ENCODE measurements at regions of chr1 and their contacts with region 1.

Region 1: DNA sequence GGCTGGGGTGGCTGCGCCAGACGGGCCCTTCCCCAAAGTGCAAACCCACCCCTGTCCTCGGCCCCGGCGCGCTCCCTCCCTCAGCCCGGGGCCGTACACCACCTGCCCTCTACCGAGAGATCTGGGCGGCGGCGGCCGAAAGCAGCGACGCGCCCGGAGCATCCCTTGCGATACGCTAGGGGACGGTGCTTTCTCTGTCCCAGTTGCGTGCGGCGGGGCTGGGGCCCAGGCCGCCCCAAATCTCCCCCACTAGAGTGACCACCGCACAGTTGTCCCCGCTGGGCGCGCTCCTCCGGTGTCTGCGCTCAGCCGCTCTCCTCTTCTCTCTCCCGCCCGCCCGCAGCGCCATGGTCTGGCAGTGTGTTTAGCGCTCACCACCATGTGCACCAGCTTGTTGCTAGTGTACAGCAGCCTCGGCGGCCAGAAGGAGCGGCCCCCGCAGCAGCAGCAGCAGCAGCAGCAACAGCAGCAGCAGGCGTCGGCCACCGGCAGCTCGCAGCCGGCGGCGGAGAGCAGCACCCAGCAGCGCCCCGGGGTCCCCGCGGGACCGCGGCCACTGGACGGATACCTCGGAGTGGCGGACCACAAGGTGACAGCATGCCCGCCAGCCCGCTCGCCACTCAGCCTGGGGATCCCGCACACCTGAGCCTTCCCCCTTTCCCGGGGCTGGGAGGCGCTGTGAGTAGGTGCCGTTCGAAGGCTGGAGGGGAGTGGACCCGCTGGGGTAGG is 1.0 kb downstream of the ST6GALNAC5 start:
- DNase-seq: peak; percentile 54 to 84
- ATAC-seq: peak; percentile 82
- H3K4me3 ChIP-seq: peak overlapping the region; percentile 57 to 79
- H3K27ac ChIP-seq: no peak overlapping the region
- H3K4me1 ChIP-seq: peaks cover 0 to 3% of the 10 kb centered on the region in 2 donors
- H3K27me3 ChIP-seq: no peaks in the 10 kb centered on the region

Region 2: GRCh38 chr1:76330991-76331603 is 537.2 kb before region 1 on chr1:
- intact Hi-C with region 1: loop called in 1 of 2 experiments (anchors 5 kb)
- DNase-seq: no peak
- ATAC-seq: peak; percentile 71
- H3K4me3 ChIP-seq: no peak overlapping the region
- H3K27ac ChIP-seq: no peak overlapping the region
- H3K4me1 ChIP-seq: peaks cover 0 to 3% of the 10 kb centered on the region in 2 donors
- H3K27me3 ChIP-seq: no peaks in the 10 kb centered on the region

Region 3: DNA sequence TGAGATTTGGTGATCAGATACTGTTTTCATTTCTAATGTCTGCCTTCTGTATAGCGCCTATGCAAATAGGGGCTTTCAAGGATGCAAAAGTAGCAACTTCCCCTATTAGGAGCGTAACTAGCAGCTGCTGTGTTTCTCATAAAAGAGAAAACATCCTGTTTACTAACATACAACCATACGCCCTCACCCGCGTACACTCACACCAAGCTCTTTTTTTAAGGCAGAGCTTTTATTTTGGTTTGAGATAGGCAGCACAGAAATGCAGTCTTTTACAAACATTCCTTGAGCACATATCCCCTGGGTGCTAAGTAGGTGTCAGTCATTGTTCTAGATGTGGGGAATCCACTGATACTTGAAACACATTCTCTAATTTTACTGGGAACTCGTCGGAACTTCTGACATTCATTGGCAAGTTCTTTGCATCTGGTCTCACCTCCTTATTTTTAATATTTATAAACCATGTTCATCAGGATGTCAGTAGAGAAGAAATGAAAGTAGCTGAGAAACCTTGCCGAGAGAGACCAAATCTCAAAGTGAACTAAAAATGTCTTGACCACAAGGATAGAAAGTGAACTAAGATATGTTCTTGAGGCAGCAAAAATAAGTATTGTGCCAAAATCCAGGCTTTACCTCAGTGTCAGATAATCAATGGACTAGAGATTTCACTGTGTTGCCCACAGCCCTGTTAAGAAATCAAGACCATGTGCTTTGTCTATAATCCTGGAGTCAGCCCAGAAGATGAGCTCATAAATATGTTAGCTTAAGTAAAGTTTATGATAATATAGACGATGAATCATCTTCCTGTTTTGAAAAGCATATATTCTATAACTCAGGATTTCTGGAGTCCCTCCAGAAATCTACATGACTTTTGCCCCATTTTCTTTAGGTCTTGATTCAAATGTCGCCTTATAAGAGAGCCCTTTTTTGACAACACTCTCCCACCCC is 442.8 kb before region 1 on chr1:
- intact Hi-C with region 1: loop called in 1 of 2 experiments (anchors 10 kb)
- DNase-seq: no peak
- ATAC-seq: no peak
- H3K4me3 ChIP-seq: peak overlapping the region in 1 of 2 donors; percentile 58
- H3K27ac ChIP-seq: peak overlapping the region; percentile 37 to 40
- H3K4me1 ChIP-seq: peaks cover 2 to 13% of the 10 kb centered on the region in 2 donors
- H3K27me3 ChIP-seq: no peaks in the 10 kb centered on the region

Region 4: GRCh38 chr1:76746206-76746605 is 122.1 kb before region 1 on chr1:
- intact Hi-C with region 1: no loop called
- DNase-seq: no peak
- ATAC-seq: no peak
- H3K4me3 ChIP-seq: no peak overlapping the region
- H3K27ac ChIP-seq: no peak overlapping the region
- H3K4me1 ChIP-seq: no peaks in the 10 kb centered on the region
- H3K27me3 ChIP-seq: no peaks in the 10 kb centered on the region